Endothelial cell of umbilical vein (primary cell): ENCODE measurements at regions of chr17 and their contacts with region 1.

Region 1: GRCh38 chr17:69523244-69523861 is 108.9 kb downstream of the MAP2K6 start:
- DNase-seq: peak; percentile 76
- H3K4me3 ChIP-seq: no peak overlapping the region
- H3K27ac ChIP-seq: no peak overlapping the region
- H3K4me1 ChIP-seq: peaks cover 14% of the 10 kb centered on the region
- H3K27me3 ChIP-seq: no peaks in the 10 kb centered on the region
- CTCF ChIP-seq: peak; percentile 68 to 74
- POLR2A ChIP-seq: no peak

Region 2: GRCh38 chr17:68812876-68813584 is 710.3 kb before region 1 on chr17:
- CTCF ChIA-PET with region 1: no interaction called
- POLR2A ChIA-PET with region 1: no interaction called
- dilution Hi-C with region 1: no loop called
- intact Hi-C with region 1: no loop called
- DNase-seq: peak; percentile 18
- H3K4me3 ChIP-seq: no peak overlapping the region
- H3K27ac ChIP-seq: no peak overlapping the region
- H3K4me1 ChIP-seq: peaks cover 7% of the 10 kb centered on the region
- H3K27me3 ChIP-seq: no peaks in the 10 kb centered on the region
- CTCF ChIP-seq: no peak
- POLR2A ChIP-seq: no peak

Region 3: DNA sequence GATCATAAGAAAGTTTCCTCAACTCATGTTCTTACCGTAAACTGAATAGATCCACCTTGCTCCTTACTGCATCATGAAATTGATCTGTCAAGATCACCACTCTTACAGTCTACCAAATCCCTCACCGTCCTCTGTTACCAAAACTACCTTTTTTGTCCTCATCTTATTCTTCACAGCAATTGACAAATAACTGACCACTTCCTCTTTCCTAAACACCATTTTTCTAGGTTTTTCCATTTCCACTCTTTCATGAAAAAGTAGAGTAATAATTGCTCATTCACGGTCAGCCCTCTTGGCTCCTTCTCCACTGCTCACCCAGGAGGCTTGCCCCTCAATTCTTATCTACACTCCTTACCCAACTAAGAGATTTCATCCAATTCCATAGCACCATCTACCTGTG is 241.4 kb before region 1 on chr17:
- CTCF ChIA-PET with region 1: no interaction called
- POLR2A ChIA-PET with region 1: no interaction called
- dilution Hi-C with region 1: no loop called
- intact Hi-C with region 1: no loop called
- DNase-seq: no peak
- H3K4me3 ChIP-seq: no peak overlapping the region
- H3K27ac ChIP-seq: no peak overlapping the region
- H3K4me1 ChIP-seq: no peaks in the 10 kb centered on the region
- H3K27me3 ChIP-seq: no peaks in the 10 kb centered on the region
- CTCF ChIP-seq: no peak
- POLR2A ChIP-seq: no peak

Region 4: DNA sequence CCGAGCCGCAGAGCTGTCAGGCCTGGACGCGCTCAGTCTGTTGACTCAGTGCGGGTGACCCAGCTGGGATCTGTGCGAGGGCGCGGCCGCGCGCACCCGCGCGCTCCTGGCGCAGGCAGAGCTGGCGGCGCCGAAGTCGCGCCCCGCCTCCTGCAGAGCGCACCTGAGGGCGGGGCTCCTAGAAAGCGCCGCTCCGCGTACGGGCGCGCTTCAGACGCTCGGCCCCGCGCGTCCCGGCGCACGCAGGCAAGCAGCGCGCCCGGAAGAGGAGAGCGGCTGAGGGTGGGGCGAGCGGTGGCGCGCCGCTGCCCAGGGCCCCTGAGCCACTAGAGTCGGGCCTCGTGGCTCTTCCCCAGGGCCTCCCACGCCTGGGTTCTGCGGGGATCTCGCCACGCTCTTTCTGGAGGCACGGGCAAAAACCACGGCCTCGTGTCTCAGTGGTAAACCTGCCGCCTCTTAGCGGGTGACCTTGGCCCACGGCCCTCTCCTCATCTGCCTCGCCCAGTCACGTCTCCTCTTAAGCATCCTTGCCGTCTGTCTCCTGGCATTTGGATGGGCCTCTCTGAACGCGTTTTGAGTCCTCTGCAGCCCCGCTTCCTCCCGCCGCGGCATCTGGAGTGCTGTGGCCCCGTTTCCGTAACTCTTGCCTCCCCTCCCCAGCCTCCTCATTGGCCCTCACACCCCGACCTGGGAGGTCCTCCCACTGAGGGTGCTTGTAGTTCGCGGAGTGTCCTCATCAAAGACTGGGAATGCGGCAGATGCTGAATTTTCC is 196.1 kb before region 1 on chr17 and contains the start of gene ABCA5:
- CTCF ChIA-PET with region 1: interaction called, 190 read pairs
- POLR2A ChIA-PET with region 1: no interaction called
- dilution Hi-C with region 1: no loop called
- intact Hi-C with region 1: loop called (anchors 2 kb)
- DNase-seq: peak; percentile 91
- H3K4me3 ChIP-seq: peak within 1 kb of the TSS; percentile 70 to 89 (median 70)
- H3K27ac ChIP-seq: peak within 1 kb of the TSS; percentile 19
- H3K4me1 ChIP-seq: peaks cover 8% of the 10 kb centered on the region
- H3K27me3 ChIP-seq: no peaks in the 10 kb centered on the region
- CTCF ChIP-seq: no peak
- POLR2A ChIP-seq: peak; percentile 87
- total RNA-seq, gene ABCA5: 23.2 and 25.4 TPM in 2 replicates

Region 5: DNA sequence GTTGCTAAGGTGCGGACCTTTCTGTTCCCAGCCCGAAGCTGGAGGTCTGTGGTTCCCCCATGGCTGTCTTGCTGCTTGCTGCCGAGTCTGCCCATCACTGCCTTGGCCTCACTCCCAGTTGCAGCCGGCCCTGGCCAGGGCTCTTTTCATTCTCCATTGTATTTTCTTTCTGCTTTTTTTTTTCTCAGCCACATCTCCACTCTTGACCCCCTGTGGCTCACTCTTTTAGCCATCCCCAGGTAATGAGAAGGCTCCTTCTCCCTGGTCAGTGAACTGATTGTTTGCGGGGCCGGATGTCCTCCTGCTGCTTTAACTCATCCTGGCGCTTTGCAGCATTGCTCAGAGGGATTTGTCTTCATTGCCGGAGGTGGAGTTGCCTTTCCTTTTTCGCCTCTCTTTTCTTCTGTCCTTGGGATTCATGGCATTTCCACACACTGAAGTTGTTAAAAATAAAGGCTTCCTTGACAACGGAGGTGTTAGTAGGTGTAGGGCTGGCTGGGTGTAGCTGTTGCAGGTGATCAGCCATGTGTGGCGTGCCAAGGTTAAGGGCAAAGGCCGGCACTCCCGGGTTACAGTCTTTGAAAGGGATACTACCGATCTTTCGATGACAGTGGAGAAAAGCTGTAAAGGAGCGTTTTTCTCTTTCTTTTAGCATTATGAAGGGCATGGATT is 74.8 kb before region 1 on chr17:
- CTCF ChIA-PET with region 1: interaction called, 10 read pairs
- POLR2A ChIA-PET with region 1: no interaction called
- dilution Hi-C with region 1: no loop called
- intact Hi-C with region 1: loop called (anchors 5 kb)
- DNase-seq: peak; percentile 54
- H3K4me3 ChIP-seq: no peak overlapping the region
- H3K27ac ChIP-seq: no peak overlapping the region
- H3K4me1 ChIP-seq: peaks cover 38% of the 10 kb centered on the region
- H3K27me3 ChIP-seq: no peaks in the 10 kb centered on the region
- CTCF ChIP-seq: no peak
- POLR2A ChIP-seq: no peak

Region 6: GRCh38 chr17:69551212-69552010 is 28.1 kb after region 1 on chr17:
- CTCF ChIA-PET with region 1: interaction called, 14 read pairs
- POLR2A ChIA-PET with region 1: no interaction called
- dilution Hi-C with region 1: no loop called
- intact Hi-C with region 1: no loop called
- DNase-seq: no peak
- H3K4me3 ChIP-seq: no peak overlapping the region
- H3K27ac ChIP-seq: no peak overlapping the region
- H3K4me1 ChIP-seq: peaks cover 4% of the 10 kb centered on the region
- H3K27me3 ChIP-seq: no peaks in the 10 kb centered on the region
- CTCF ChIP-seq: no peak
- POLR2A ChIP-seq: no peak

Region 7: GRCh38 chr17:70168977-70169708 is 645.8 kb after region 1 on chr17 and contains the start of gene KCNJ2:
- CTCF ChIA-PET with region 1: interaction called, 14 read pairs
- POLR2A ChIA-PET with region 1: no interaction called
- dilution Hi-C with region 1: no loop called
- intact Hi-C with region 1: loop called (anchors 1 kb)
- DNase-seq: peak; percentile 93
- H3K4me3 ChIP-seq: peak within 1 kb of the TSS; percentile 85 to 97 (median 95)
- H3K27ac ChIP-seq: peak within 1 kb of the TSS; percentile 87
- H3K4me1 ChIP-seq: peaks cover 58% of the 10 kb centered on the region
- H3K27me3 ChIP-seq: no peaks in the 10 kb centered on the region
- CTCF ChIP-seq: no peak
- POLR2A ChIP-seq: peak; percentile 95
- total RNA-seq, gene KCNJ2: 11.5 and 15.5 TPM in 2 replicates

Region 8: GRCh38 chr17:70629902-70630301 is 1106.5 kb after region 1 on chr17:
- CTCF ChIA-PET with region 1: interaction called, 120 read pairs
- POLR2A ChIA-PET with region 1: no interaction called
- dilution Hi-C with region 1: no loop called
- intact Hi-C with region 1: loop called (anchors 1 kb)
- DNase-seq: peak; percentile 44
- H3K4me3 ChIP-seq: no peak overlapping the region
- H3K27ac ChIP-seq: no peak overlapping the region
- H3K4me1 ChIP-seq: no peaks in the 10 kb centered on the region
- H3K27me3 ChIP-seq: peaks cover 4 to 11% of the 10 kb centered on the region in 2 experiments
- CTCF ChIP-seq: peak in 1 of 2 donors; percentile 18
- POLR2A ChIP-seq: no peak